Natural killer cell (primary cell): ENCODE measurements at regions of chr18 and their contacts with region 1.

Region 1: DNA sequence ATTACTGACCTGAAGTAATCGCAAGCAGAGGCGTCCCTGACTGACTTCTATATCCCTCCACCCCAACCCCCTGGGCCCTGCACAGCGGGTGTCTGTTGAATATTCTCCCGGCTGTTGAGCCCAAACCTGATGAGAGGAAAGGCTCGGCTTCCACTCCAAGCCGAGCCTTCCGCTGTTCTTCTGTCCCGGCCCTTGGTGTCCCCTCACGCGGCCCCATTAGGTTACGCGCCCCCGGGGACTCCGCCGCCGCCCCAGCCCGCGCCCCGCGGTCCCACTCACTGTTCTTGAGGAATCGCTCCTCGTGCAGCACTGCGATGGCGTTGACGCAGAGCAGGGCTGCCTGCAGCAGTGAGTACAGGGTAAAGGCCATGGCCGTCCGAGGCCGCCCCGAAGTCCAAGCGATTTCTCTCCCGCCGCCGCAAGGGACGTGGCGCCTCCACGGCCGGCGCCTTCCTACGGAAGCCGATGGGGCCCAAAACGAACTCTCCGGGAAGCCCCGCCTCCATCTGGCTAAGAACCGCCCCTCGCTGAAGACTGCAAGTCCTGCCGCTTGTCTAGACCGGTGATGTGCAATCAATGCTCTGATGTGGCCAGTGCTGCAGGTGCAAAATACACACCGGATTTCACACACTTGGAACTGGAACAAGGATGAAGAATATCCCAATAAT is at the start of gene IER3IP1:
- DNase-seq: peak; percentile 82 to 91
- ATAC-seq: peak; percentile 92 to 97 (median 96)
- H3K4me3 ChIP-seq: peak within 1 kb of the TSS; percentile 99
- H3K4me3 Mint-ChIP-seq: peak within 1 kb of the TSS; percentile 77
- H3K27ac ChIP-seq: peak within 1 kb of the TSS; percentile 3
- H3K27ac Mint-ChIP-seq: peak within 1 kb of the TSS in 1 of 2 donors; percentile 50
- H3K4me1 ChIP-seq: peaks cover 23% of the 10 kb centered on the region
- H3K4me1 Mint-ChIP-seq: peaks cover 0 to 4% of the 10 kb centered on the region in 2 donors
- H3K27me3 ChIP-seq: no peaks in the 10 kb centered on the region
- H3K27me3 Mint-ChIP-seq: peaks cover 0 to 14% of the 10 kb centered on the region in 2 donors
- CTCF ChIP-seq: no peak
- total RNA-seq, gene IER3IP1: 6.1 to 8.7 (median 8.4) TPM

Region 2: DNA sequence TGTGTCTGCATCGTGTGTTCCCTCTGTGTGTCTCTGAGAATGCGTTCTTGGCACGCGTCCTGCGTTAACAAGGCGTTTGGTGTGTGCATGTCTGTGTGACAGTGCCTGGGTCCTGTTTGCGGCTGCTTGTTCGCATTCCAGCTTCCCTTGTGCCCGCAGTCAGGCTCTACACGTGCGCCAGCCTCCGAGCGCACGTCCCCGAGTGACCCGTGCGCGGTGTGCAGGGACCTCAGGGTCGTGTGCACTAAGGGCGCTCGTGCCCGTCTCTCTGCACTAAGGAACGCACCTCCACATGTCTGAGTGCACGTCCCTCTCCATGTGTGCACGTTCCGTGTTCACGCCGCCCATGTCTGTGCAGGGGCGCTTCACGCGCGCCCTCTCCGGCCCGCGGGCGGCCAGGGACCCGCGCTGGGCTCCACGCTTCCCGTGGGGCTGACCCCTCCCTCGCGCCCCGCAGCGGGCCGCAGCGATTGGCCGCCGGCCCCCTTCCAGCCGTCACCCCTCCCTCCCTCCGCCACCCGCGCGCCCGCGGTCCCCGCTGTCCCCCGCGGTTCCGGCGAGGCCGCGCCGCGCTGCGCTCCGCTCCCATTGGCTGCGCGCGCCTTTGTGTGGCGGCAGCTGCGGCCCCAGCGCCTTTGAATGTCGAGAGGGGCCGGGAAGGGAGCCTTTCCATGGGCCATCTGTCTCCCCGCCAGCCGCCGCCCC is 842.5 kb before region 1 on chr18:
- intact Hi-C with region 1: no loop called
- DNase-seq: peak; percentile 18 to 55
- ATAC-seq: peak; percentile 33 to 57 (median 56)
- H3K4me3 ChIP-seq: peak overlapping the region; percentile 40
- H3K4me3 Mint-ChIP-seq: peak overlapping the region; percentile 87
- H3K27ac ChIP-seq: no peak overlapping the region
- H3K27ac Mint-ChIP-seq: peak overlapping the region; percentile 64 to 78
- H3K4me1 ChIP-seq: peaks cover 45% of the 10 kb centered on the region
- H3K4me1 Mint-ChIP-seq: peaks cover 59% of the 10 kb centered on the region in 2 donors
- H3K27me3 ChIP-seq: no peaks in the 10 kb centered on the region
- H3K27me3 Mint-ChIP-seq: no peaks in the 10 kb centered on the region
- CTCF ChIP-seq: no peak

Region 3: DNA sequence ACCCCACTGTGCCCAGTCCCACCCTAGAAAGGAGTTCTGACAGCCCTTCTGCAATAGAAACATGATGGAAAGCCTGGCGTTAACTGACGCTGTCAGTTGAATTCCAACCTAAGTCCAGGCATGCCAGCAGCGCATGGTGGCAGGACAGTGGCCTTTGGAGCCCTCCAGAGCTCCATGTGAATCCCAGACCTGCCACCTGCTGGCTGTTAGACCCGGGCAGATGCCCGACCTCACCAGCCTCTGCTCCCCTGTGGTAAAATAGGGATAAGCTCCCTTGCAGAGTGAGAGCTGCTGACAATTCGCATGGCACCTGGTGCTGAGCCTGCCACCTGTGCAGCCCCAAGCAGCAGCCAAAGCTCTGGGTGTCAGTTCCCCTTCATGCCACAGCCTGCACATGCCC is 657.6 kb before region 1 on chr18:
- intact Hi-C with region 1: no loop called
- DNase-seq: no peak
- ATAC-seq: no peak
- H3K4me3 ChIP-seq: no peak overlapping the region
- H3K4me3 Mint-ChIP-seq: no peak overlapping the region
- H3K27ac ChIP-seq: no peak overlapping the region
- H3K27ac Mint-ChIP-seq: no peak overlapping the region
- H3K4me1 ChIP-seq: no peaks in the 10 kb centered on the region
- H3K4me1 Mint-ChIP-seq: no peaks in the 10 kb centered on the region
- H3K27me3 ChIP-seq: no peaks in the 10 kb centered on the region
- H3K27me3 Mint-ChIP-seq: peaks cover 10 to 15% of the 10 kb centered on the region in 2 donors
- CTCF ChIP-seq: no peak

Region 4: DNA sequence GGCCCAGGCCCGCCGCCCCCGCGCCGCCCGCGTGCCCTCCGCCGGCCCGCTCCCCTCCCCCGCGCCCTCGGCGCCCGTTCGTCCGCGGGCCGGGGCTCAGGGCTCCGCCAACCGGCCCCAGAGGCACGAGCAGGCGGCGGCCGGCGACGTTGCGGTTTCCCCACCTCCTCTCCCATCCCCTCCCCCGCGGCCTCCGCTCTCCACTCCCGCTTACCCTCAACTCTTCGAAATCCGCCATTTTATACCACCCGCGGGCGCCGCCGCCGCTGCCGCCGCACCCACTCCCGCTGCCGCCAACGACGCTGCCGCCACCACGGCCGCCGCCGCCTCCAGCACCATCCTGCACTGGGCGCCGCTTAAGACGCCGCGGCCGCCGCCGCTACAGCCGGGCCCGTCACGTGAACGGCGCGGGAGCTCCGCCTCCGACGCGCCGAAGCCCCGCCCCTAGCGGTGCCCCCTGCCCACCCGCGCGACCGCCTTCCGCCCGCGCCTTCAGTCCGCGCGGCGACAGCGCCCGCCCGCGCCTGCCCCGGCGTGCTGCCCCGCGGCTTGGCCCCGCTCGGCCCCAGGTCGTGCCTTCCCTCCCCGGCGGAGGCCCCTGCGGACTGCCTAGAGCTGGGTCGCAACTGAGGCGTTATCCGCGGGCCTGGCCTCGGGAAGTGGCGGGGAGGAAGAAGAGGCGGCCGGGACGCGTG is 258.8 kb before region 1 on chr18 and contains the starts of genes KATNAL2 and PIAS2:
- intact Hi-C with region 1: no loop called
- DNase-seq: peak; percentile 73 to 87
- ATAC-seq: peak; percentile 78 to 89 (median 82)
- H3K4me3 ChIP-seq: peak within 1 kb of the TSS; percentile 84
- H3K4me3 Mint-ChIP-seq: peak within 1 kb of the TSS; percentile 81
- H3K27ac ChIP-seq: peak within 1 kb of the TSS; percentile 70
- H3K27ac Mint-ChIP-seq: peak within 1 kb of the TSS; percentile 80 to 86
- H3K4me1 ChIP-seq: peaks cover 13% of the 10 kb centered on the region
- H3K4me1 Mint-ChIP-seq: peaks cover 37 to 43% of the 10 kb centered on the region in 2 donors
- H3K27me3 ChIP-seq: no peaks in the 10 kb centered on the region
- H3K27me3 Mint-ChIP-seq: no peaks in the 10 kb centered on the region
- CTCF ChIP-seq: no peak
- total RNA-seq, gene KATNAL2: 0.45 to 1.2 (median 0.52) TPM
- total RNA-seq, gene PIAS2: 48.9 to 55.9 (median 50.0) TPM

Region 5: GRCh38 chr18:47150029-47150823 is 25.8 kb before region 1 on chr18 and contains the start of gene HDHD2:
- intact Hi-C with region 1: loop called (anchors 1 kb)
- DNase-seq: peak; percentile 64 to 84
- ATAC-seq: peak; percentile 82 to 86 (median 86)
- H3K4me3 ChIP-seq: peak within 1 kb of the TSS; percentile 59
- H3K4me3 Mint-ChIP-seq: peak within 1 kb of the TSS; percentile 97
- H3K27ac ChIP-seq: peak within 1 kb of the TSS; percentile 60
- H3K27ac Mint-ChIP-seq: peak within 1 kb of the TSS; percentile 92 to 95
- H3K4me1 ChIP-seq: peaks cover 22% of the 10 kb centered on the region
- H3K4me1 Mint-ChIP-seq: peaks cover 45 to 52% of the 10 kb centered on the region in 2 donors
- H3K27me3 ChIP-seq: no peaks in the 10 kb centered on the region
- H3K27me3 Mint-ChIP-seq: no peaks in the 10 kb centered on the region
- CTCF ChIP-seq: no peak
- total RNA-seq, gene HDHD2: 27.5 to 36.2 (median 35.3) TPM